HCT116 (cell line): ENCODE measurements at regions of chr3 and their contacts with region 1.

Region 1: GRCh38 chr3:171874251-171874679 is 31.1 kb downstream of the TMEM212 start:
- DNase-seq: no peak
- ATAC-seq: no peak
- H3K4me3 ChIP-seq: no peak overlapping the region
- H3K27ac ChIP-seq: no peak overlapping the region
- H3K4me1 ChIP-seq: no peaks in the 10 kb centered on the region; a peak in 1 of 4 replicates
- H3K27me3 ChIP-seq: no peaks in the 10 kb centered on the region
- CTCF ChIP-seq: no peak
- POLR2A ChIP-seq: no peak
- RAD21 ChIP-seq: no peak

Region 2: DNA sequence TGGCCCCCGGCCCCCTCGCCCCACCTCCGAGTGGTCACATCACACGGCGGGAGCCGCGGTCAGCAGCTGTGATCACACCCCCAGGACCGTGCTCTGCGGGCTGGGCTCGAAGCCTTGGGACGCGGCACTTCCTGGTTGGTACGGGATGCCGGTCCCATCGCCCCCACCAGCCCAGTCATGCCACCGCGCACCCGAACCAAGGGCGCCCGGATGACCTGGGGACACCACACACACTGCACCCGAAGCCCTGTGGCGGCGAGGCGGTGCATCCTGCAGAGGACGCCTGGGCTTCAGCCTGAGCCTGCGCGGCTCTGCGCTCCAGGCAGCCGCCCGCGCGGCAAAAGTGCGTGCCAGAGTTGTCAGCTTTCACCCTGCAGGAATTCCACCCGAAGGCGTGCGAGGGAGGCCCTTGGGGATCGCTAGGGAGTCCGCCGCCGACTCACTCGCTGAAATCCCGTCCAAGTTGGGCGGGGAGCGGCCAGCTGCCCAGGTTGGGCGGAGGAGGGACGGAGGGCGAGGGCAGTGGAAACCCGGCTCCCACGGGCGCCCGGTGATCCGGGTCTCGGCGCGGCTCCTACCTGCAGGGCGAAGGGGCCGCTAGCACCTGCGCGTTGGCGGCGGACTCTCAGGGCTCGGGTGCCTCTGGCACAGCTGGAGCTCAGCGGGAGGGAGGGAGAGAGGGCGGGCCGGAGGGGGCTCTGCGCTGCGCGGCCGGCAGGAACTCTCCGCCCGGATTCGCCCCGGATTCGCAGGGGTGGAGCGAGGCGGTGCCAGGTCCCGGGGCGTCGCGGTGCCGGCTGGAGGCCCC is 64.2 kb before region 1 on chr3 and contains the start of gene PLD1:
- CTCF ChIA-PET with region 1: no interaction called
- POLR2A ChIA-PET with region 1: no interaction called
- RAD21 ChIA-PET with region 1: no interaction called
- intact Hi-C with region 1: loop called (anchors 10 kb)
- DNase-seq: peak; percentile 63
- ATAC-seq: peak; percentile 86
- H3K4me3 ChIP-seq: peak within 1 kb of the TSS; percentile 65 to 78
- H3K27ac ChIP-seq: peak within 1 kb of the TSS; percentile 87
- H3K4me1 ChIP-seq: peaks cover 8 to 50% of the 10 kb centered on the region in 2 experiments; a peak in 3 of 4 replicates
- H3K27me3 ChIP-seq: no peaks in the 10 kb centered on the region
- CTCF ChIP-seq: no peak
- POLR2A ChIP-seq: peak; percentile 37
- RAD21 ChIP-seq: no peak
- total RNA-seq, gene PLD1: 8.4 TPM